Caco-2 (cell line): ENCODE measurements at regions of chr3 and their contacts with region 1.

Region 1: DNA sequence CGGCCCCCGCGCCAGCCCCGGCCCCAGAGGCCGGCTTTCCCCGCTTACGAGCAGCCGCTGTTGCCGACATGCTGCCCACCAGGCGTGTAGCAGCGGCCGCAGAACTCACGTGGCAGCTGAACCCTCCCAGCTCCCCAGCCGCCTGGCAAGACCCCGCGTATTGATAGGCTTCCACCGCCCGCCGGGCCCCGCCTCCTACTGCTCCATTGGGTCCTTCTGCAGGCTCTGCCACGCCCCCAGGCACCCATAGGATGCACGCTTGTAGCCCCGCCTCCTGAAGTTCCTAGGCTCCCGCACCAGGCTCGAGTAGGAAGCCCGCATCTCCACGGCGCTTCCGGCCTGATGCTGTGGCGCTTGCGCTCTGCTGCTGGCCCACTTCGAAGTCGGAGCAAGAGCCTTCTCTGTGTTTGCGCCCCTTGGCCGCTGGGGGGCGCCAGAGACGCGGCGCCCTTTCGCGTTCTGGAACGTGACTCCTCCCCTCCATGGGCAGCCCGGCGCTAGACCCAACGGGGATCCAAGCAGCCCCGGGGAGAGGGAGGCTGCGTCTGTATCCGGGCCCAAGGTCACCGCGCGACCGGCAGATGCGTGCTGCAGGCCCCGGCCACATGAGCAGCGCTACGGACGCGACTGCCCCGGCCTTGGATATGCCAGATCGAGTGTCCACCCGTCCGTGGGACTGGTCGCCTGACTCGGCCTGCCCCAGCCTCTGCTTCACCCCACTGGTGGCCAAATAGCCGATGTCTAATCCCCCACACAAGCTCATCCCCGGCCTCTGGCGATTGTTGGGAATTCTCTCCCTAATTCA is at the starts of genes PARP3 and RRP9:
- DNase-seq: peak; percentile 99 to 100
- H3K4me3 ChIP-seq: peak within 1 kb of the TSS; percentile 49
- H3K4me3 Mint-ChIP-seq: peak within 1 kb of the TSS; percentile 63
- H3K27ac Mint-ChIP-seq: peak within 1 kb of the TSS; percentile 6
- H3K4me1 ChIP-seq: peaks cover 13% of the 10 kb centered on the region
- H3K4me1 Mint-ChIP-seq: peaks cover 7% of the 10 kb centered on the region
- H3K27me3 ChIP-seq: no peaks in the 10 kb centered on the region
- H3K27me3 Mint-ChIP-seq: no peaks in the 10 kb centered on the region
- CTCF ChIP-seq: peak; percentile 95
- total RNA-seq, gene PARP3: 3.3 and 5.6 TPM in 2 replicates
- total RNA-seq, gene RRP9: 39.1 and 43.0 TPM in 2 replicates

Region 2: GRCh38 chr3:51974963-51975851 is 33.2 kb after region 1 on chr3 and contains the start of gene ABHD14A:
- CTCF ChIA-PET with region 1: interaction called, 32 read pairs
- POLR2A ChIA-PET with region 1: interaction called, 6 read pairs
- intact Hi-C with region 1: loop called (anchors 1 kb)
- DNase-seq: peak; percentile 80 to 83
- H3K4me3 ChIP-seq: peak within 1 kb of the TSS; percentile 71
- H3K4me3 Mint-ChIP-seq: peak within 1 kb of the TSS; percentile 91
- H3K27ac Mint-ChIP-seq: peak within 1 kb of the TSS; percentile 74
- H3K4me1 ChIP-seq: peaks cover 12% of the 10 kb centered on the region
- H3K4me1 Mint-ChIP-seq: peaks cover 7% of the 10 kb centered on the region
- H3K27me3 ChIP-seq: no peaks in the 10 kb centered on the region
- H3K27me3 Mint-ChIP-seq: no peaks in the 10 kb centered on the region
- CTCF ChIP-seq: no peak
- total RNA-seq, gene ABHD14A: 14.0 and 16.3 TPM in 2 replicates

Region 3: GRCh38 chr3:51995346-51996163 is 53.6 kb after region 1 on chr3 and contains the start of gene RPL29:
- CTCF ChIA-PET with region 1: interaction called, 4 read pairs
- POLR2A ChIA-PET with region 1: interaction called, 10 read pairs
- intact Hi-C with region 1: loop called (anchors 2 kb)
- DNase-seq: peak; percentile 93
- H3K4me3 ChIP-seq: peak within 1 kb of the TSS; percentile 60
- H3K4me3 Mint-ChIP-seq: peak within 1 kb of the TSS; percentile 93
- H3K27ac Mint-ChIP-seq: peak within 1 kb of the TSS; percentile 99
- H3K4me1 ChIP-seq: peaks cover 18% of the 10 kb centered on the region
- H3K4me1 Mint-ChIP-seq: peaks cover 9% of the 10 kb centered on the region
- H3K27me3 ChIP-seq: no peaks in the 10 kb centered on the region
- H3K27me3 Mint-ChIP-seq: no peaks in the 10 kb centered on the region
- CTCF ChIP-seq: no peak
- total RNA-seq, gene RPL29: 976 and 995 TPM in 2 replicates

Region 4: DNA sequence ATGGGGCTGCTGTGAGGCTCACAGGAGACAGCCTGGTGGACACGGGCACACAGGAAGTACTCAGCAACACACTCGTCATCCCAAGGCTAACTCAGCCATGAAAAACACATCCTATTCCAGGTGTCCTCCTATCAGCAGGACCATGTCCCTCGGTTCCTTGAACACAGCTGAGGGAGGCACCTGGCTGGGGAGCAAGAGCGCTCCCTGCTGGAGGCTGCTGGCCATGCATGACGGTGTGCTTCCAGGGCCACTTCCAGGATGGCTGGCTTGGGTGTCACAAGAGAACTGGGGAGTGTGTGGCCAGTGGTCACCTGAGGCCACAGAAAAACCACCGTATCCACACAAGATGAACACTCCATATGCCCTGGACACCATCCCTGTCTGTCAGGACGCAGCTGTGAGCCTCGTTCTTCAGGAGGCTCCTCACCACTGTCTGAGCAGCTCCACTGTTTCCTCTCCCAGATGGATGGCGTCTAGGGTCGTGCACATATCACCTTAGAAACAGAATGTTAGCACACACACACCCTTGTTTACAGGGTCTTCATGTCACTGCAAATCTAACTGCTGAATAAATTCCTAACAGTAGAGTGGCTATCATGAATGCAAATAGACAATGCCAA is 181.2 kb after region 1 on chr3:
- CTCF ChIA-PET with region 1: interaction called, 3 read pairs
- POLR2A ChIA-PET with region 1: no interaction called
- intact Hi-C with region 1: loop called (anchors 1 kb)
- DNase-seq: peak; percentile 47 to 73
- H3K4me3 ChIP-seq: no peak overlapping the region
- H3K4me3 Mint-ChIP-seq: no peak overlapping the region
- H3K27ac Mint-ChIP-seq: no peak overlapping the region
- H3K4me1 ChIP-seq: peaks cover 7% of the 10 kb centered on the region; the same call in 1 of the 2 replicates
- H3K4me1 Mint-ChIP-seq: no peaks in the 10 kb centered on the region
- H3K27me3 ChIP-seq: no peaks in the 10 kb centered on the region
- H3K27me3 Mint-ChIP-seq: no peaks in the 10 kb centered on the region
- CTCF ChIP-seq: peak; percentile 69 to 94